ENCODE measurements at regions of chr1 and their contacts with region 1.

Region 1: GRCh38 chr1:110554871-110555801 is 36.2 kb upstream of the KCNA10 start:
- DNase-seq: peak in 1 of 2 donors; percentile 40
- ATAC-seq: peak; percentile 73

Region 2: GRCh38 chr1:110619412-110620249 is 64.5 kb after region 1 on chr1:
- intact Hi-C with region 1: loop called in 1 of 2 experiments (anchors 5 kb)
- DNase-seq: peak; percentile 70 to 86
- ATAC-seq: peak; percentile 90

Region 3: DNA sequence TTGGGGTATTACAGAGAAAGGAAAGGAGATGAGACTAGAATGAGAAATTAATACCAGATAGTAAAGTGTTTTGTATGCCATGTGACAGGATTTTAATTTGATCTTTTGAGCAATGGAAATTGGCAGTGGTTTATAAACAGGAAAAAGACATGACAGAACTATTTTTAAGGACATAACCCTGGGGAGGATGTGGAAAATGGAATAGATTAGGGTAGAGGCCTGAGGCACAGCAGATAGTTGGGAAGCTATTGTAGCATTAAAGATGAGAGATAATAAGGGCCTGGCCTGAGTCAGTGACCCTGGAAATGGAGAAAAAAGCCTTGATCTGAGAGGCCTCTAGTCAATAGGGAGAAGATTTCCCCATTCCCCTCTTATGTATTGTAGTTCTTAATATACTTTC is 141.7 kb after region 1 on chr1:
- intact Hi-C with region 1: no loop called
- DNase-seq: no peak
- ATAC-seq: no peak